ENCODE measurements at regions of chr6 and their contacts with region 1.

Region 1: DNA sequence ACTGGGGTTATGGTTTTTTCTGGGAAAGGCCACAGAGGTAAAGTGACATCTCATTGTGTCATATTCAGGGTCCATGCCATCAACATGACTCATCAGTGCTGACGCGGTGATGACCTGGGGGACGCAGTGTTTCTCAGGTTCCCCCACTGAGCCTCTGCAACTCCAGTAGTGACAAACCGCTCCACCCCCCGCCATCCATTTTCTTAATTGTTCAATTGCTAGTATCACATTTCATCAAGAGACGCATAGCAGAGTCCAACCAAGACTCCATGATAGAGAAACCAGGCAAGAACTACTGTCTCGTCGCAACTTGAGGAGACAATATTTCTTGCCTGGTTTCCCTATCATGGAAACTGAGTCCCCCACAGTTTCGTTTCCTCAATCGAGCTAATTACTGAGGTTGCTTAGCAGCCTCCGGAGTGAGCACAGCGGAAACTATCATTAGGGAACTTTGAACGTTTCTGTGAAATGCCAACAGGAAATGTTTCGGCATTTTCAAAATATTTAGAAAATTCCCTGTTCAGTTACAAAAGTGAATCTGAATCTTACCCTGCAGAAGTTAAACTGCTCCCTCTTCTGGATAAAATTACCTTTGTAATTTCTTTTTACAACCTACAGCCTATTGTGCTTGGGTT is 12.2 kb upstream of the SERPINB1 start:
- DNase-seq: peak in 1 of 2 experiments; percentile 80
- ATAC-seq: peak; percentile 45 to 68; a peak in 5 of 6 replicates
- H3K4me3 ChIP-seq: peak overlapping the region; percentile 39
- H3K27ac ChIP-seq: peak overlapping the region; percentile 84 to 94
- H3K4me1 ChIP-seq: peaks cover 62% of the 10 kb centered on the region
- CTCF ChIP-seq: peak; percentile 48
- EP300 ChIP-seq: 0 out of 5 replicates have a peak, but pooled peaks of 1 of the 2 experiments have one; percentile 25
- POLR2A ChIP-seq: no peak
- RAD21 ChIP-seq: peak in 1 of 2 experiments; percentile 41; a peak in 4 of 5 replicates

Region 2: DNA sequence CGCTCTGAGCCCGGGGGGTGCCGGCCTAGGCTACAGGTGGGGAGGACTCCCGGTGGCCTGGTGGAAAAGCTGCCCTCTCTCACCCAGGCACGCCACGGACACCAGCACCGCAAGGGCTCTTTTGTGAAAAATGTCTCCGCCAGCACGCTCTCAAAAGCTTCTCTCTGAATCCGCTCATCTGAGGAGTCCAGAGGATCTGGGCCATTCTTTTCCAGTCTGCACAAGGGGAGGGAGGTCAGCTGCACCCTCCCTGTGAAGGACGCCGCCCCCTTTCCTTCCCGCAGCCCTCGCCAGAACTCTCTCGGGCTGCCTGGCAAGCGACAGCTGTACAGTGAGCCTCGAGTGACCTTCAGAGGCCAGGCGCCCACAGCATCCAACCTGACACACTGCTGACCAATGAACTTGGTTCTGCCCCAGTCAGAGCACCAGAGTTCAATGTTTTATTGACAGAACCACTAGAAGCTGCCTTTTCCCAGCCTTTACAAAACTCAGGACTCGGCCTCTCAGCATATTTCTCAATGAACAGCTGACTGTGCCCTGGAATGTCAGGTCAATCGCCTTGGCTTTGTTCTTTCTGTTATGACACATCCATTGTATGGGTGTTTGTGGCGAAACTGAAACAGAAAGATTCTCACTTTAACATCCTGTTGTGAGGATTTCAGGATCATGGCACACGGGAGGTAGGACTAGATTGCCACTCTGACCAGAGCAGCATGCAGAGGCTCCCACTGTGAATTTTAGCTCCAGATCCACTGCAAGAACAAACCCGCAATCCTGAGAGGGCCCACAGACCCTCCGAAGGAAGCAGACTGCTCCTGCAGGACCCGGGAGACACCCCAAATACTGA is 22.6 kb after region 1 on chr6:
- CTCF ChIA-PET with region 1: interaction called, 12 read pairs
- POLR2A ChIA-PET with region 1: interaction called, 3 read pairs
- DNase-seq: peak; percentile 74 to 86
- ATAC-seq: peak; percentile 87 to 92
- H3K4me3 ChIP-seq: peak overlapping the region; percentile 44
- H3K27ac ChIP-seq: peak overlapping the region; percentile 96 to 100
- H3K4me1 ChIP-seq: peaks cover 39% of the 10 kb centered on the region
- CTCF ChIP-seq: no peak
- EP300 ChIP-seq: 0 out of 5 replicates have a peak, but pooled peaks of 1 of the 2 experiments have one; percentile 15
- POLR2A ChIP-seq: peak; percentile 23; the same call in 1 of the 2 replicates
- RAD21 ChIP-seq: no peak; a peak in 1 of 5 replicates